GM23248 (cell line): ENCODE measurements at regions of chr1 and their contacts with region 1.

Region 1: GRCh38 chr1:39973503-39974135 is 18.7 kb downstream of the MFSD2A start:
- DNase-seq: peak; percentile 78
- H3K4me3 ChIP-seq: 0 out of 2 replicates have a peak overlapping the region, but pooled peaks have one; percentile 31
- H3K27ac ChIP-seq: no peak overlapping the region
- H3K4me1 ChIP-seq: peaks cover 4% of the 10 kb centered on the region
- H3K27me3 ChIP-seq: no peaks in the 10 kb centered on the region

Region 2: GRCh38 chr1:39418236-39418635 is 555.4 kb before region 1 on chr1:
- in situ Hi-C with region 1: no loop called
- DNase-seq: no peak
- H3K4me3 ChIP-seq: 0 out of 2 replicates have a peak overlapping the region, but pooled peaks have one; percentile 33
- H3K27ac ChIP-seq: 0 out of 2 replicates have a peak overlapping the region, but pooled peaks have one; percentile 8
- H3K4me1 ChIP-seq: peaks cover 45% of the 10 kb centered on the region
- H3K27me3 ChIP-seq: no peaks in the 10 kb centered on the region

Region 3: GRCh38 chr1:39825432-39825951 is 148.1 kb before region 1 on chr1:
- in situ Hi-C with region 1: loop called (anchors 10 kb)
- DNase-seq: no peak
- H3K4me3 ChIP-seq: no peak overlapping the region
- H3K27ac ChIP-seq: no peak overlapping the region
- H3K4me1 ChIP-seq: peaks cover 9% of the 10 kb centered on the region
- H3K27me3 ChIP-seq: no peaks in the 10 kb centered on the region